ENCODE measurements at regions of chr20 and their contacts with region 1.

Region 1: GRCh38 chr20:6074145-6074561 is 20.3 kb upstream of the LRRN4 start:
- DNase-seq: peak; percentile 20
- H3K4me3 Mint-ChIP-seq: no peak overlapping the region
- H3K27ac Mint-ChIP-seq: peak overlapping the region; percentile 32
- H3K4me1 Mint-ChIP-seq: no peaks in the 10 kb centered on the region
- H3K27me3 Mint-ChIP-seq: no peaks in the 10 kb centered on the region
- CTCF ChIP-seq: no peak

Region 2: GRCh38 chr20:5950271-5951031 is 123.7 kb before region 1 on chr20 and contains the starts of genes MCM8 and TRMT6:
- CTCF ChIA-PET with region 1: interaction called, 4 read pairs
- POLR2A ChIA-PET with region 1: interaction called, 4 read pairs
- intact Hi-C with region 1: loop called (anchors 2 kb)
- DNase-seq: peak; percentile 96
- H3K4me3 Mint-ChIP-seq: peak within 1 kb of the TSS; percentile 99
- H3K27ac Mint-ChIP-seq: peak within 1 kb of the TSS; percentile 59
- H3K4me1 Mint-ChIP-seq: peaks cover 22% of the 10 kb centered on the region
- H3K27me3 Mint-ChIP-seq: no peaks in the 10 kb centered on the region
- CTCF ChIP-seq: no peak
- total RNA-seq, gene MCM8: 8.0 and 12.4 TPM in 2 replicates
- total RNA-seq, gene TRMT6: 31.0 and 44.9 TPM in 2 replicates

Region 3: DNA sequence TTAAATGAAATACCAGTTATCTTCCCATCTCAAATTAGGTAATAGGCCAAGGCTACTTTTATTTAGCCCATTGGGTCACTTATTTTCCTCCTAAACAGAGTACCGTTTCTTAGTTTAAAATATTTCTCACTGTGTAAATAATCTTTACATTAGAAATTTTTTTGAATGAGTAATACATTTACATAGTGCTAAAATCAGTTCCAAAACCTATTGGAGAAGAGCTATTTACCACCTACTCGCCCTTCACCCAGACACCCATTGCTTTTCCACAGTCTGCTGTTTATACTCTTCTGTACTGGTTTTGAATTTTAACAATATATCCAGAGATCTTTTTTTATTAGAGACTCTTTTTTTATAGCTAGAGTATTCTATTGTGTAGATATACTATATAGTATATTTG is 86.8 kb before region 1 on chr20:
- CTCF ChIA-PET with region 1: no interaction called
- POLR2A ChIA-PET with region 1: no interaction called
- intact Hi-C with region 1: no loop called
- DNase-seq: no peak
- H3K4me3 Mint-ChIP-seq: no peak overlapping the region
- H3K27ac Mint-ChIP-seq: no peak overlapping the region
- H3K4me1 Mint-ChIP-seq: no peaks in the 10 kb centered on the region
- H3K27me3 Mint-ChIP-seq: no peaks in the 10 kb centered on the region
- CTCF ChIP-seq: no peak

Region 4: GRCh38 chr20:6034134-6034969 is 39.8 kb before region 1 on chr20:
- CTCF ChIA-PET with region 1: interaction called, 10 read pairs
- POLR2A ChIA-PET with region 1: interaction called, 3 read pairs
- intact Hi-C with region 1: no loop called
- DNase-seq: no peak
- H3K4me3 Mint-ChIP-seq: no peak overlapping the region
- H3K27ac Mint-ChIP-seq: peak overlapping the region; percentile 30
- H3K4me1 Mint-ChIP-seq: peaks cover 9% of the 10 kb centered on the region
- H3K27me3 Mint-ChIP-seq: no peaks in the 10 kb centered on the region
- CTCF ChIP-seq: no peak

Region 5: GRCh38 chr20:6061544-6061943 is 12.6 kb before region 1 on chr20:
- CTCF ChIA-PET with region 1: interaction called, 11 read pairs
- POLR2A ChIA-PET with region 1: no interaction called
- intact Hi-C with region 1: no loop called
- DNase-seq: no peak
- H3K4me3 Mint-ChIP-seq: no peak overlapping the region
- H3K27ac Mint-ChIP-seq: no peak overlapping the region
- H3K4me1 Mint-ChIP-seq: no peaks in the 10 kb centered on the region
- H3K27me3 Mint-ChIP-seq: no peaks in the 10 kb centered on the region
- CTCF ChIP-seq: no peak

Region 6: DNA sequence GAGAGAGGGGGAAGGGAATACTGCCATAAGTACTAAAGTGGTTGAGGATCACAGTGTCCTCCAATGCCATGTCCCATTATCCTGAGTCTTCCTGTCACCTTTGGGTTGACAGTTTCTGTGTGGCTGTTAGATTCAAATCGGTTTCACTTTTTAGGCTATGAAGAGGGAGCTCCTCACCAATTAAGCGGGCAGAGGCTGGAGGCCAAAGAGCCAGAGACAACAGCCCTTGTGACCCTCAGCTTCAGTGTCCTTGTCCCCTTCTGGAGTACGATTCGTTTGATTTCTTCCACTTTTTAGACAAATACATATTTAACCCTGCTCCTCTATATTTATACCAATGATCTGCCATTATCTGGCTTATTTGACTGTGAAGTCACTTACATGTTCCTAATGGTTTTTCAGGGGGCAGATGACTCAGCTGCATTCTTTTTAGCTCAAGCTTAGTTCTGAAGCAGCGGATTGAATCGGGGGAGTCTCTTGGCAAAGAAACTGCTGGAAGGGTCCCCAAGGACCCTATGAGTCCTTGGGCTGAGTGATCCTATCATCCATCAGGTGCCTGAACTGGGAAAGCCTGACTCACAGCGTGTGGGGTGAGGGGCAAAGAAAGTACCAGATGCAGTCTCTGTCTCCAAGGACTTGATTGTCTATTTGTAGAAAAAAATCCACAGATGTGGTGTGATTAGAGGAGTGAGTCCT is 30.5 kb after region 1 on chr20:
- CTCF ChIA-PET with region 1: interaction called, 14 read pairs
- POLR2A ChIA-PET with region 1: interaction called, 3 read pairs
- intact Hi-C with region 1: no loop called
- DNase-seq: no peak
- H3K4me3 Mint-ChIP-seq: no peak overlapping the region
- H3K27ac Mint-ChIP-seq: peak overlapping the region; percentile 63
- H3K4me1 Mint-ChIP-seq: peaks cover 4% of the 10 kb centered on the region
- H3K27me3 Mint-ChIP-seq: no peaks in the 10 kb centered on the region
- CTCF ChIP-seq: no peak

Measured in MCF 10A (cell line).